SK-N-SH (cell line): ENCODE measurements at regions of chrX and their contacts with region 1.

Region 1: GRCh38 chrX:154013614-154014360 is 5.9 kb downstream of the IRAK1 start:
- DNase-seq: peak; percentile 88
- H3K4me3 ChIP-seq: peak overlapping the region in 1 of 2 experiments; percentile 17; a peak in 1 of 4 replicates
- H3K27ac ChIP-seq: no peak overlapping the region
- H3K4me1 ChIP-seq: peaks cover 0 to 7% of the 10 kb centered on the region in 2 experiments; a peak in 1 of 4 replicates
- H3K27me3 ChIP-seq: no peaks in the 10 kb centered on the region
- CTCF ChIP-seq: peak; percentile 98
- EP300 ChIP-seq: no peak
- RAD21 ChIP-seq: peak; percentile 62

Region 2: DNA sequence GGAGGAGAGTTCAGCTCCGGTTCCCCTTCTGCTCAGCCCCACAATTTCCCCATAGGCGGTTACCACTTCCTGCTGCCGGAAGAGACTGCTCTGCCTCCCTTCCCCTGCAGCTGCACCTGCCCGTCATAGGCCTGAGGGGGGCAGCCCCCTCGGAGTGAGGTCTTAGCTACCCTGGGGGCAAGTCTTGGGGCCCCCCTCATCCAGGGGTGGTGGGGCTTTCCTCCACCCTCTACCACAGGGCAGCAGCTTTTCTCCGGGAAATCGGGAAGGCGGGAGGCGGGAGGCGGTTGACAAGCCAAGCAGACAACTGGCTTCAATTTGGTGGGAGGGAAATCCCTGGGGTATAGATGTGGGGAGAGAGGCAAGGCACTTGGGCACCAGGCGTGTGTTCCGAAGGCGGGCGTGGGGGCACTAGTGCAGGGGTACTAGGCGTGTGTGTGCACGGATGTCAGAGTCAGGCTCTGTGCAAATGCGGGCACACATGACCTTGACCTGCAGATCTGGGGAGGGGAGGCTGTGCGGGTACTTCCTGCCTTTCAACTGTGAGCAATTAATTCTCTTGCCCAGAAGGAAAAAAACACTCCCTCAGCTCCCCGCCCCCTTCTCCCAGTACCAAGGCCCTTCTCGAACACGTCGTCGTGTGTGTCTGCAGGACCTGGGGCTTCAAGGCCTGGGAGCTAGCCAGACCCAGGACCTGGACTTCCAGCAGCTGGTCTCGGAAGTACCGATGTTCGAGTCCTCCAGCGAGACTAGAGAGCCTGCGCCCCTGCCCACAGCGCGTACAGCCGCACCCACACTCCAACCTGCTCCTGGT is 86.7 kb before region 1 on chrX:
- CTCF ChIA-PET with region 1: no interaction called
- POLR2A ChIA-PET with region 1: no interaction called
- DNase-seq: peak; percentile 69
- H3K4me3 ChIP-seq: peak overlapping the region; percentile 71 to 94
- H3K27ac ChIP-seq: peak overlapping the region; percentile 97
- H3K4me1 ChIP-seq: peaks cover 0 to 60% of the 10 kb centered on the region in 2 experiments; a peak in 1 of 4 replicates
- H3K27me3 ChIP-seq: peaks cover 5% of the 10 kb centered on the region; the same call in 1 of the 2 replicates
- CTCF ChIP-seq: no peak
- EP300 ChIP-seq: no peak
- RAD21 ChIP-seq: no peak

Region 3: DNA sequence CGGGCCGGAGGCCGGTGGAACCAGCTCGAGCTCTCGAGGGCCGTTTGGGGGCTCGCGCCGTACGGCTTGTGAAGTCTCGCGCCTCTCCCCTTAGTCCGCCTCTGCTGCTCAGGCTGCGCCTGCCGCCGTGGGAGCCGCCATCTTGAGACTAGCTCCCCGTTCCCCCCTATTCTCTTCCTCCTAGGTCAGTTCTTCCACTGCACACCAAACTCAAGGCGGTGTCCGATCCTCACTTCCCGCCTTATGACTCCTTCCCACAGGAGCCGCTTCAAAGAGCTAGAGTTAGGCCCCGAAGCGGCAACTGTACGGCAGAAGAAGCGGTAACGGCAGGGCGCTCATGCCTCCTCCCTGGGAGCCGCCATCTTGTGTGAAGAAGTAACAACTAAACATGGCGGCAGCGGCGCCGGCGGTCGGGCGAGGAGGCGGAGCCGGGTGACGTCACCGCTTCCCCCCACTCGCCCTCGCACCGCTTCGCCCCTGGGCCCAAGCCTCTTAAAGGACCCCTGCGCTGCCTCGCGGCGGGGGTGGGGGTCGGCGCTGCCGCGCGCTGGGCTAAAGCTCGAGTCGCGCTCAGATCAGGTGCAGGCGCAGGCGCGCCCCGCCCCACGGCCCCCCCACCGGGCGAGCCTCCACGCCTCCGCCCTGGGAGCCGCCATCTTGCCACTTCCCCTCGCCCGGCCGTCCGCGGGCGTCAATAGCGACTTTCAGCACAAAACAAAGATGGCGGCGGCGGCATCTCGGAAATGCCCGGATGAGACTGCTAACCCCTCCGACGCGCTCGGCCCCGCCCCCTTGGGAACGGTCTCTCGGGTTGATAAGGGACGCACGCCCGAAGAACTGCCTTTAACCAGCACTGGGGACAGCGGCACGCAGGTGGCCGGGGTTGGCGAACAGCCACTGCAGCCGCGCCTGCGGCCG is 42.1 kb before region 1 on chrX and contains the start of gene HCFC1:
- CTCF ChIA-PET with region 1: interaction called, 15 read pairs
- POLR2A ChIA-PET with region 1: interaction called, 3 read pairs
- DNase-seq: peak; percentile 90
- H3K4me3 ChIP-seq: peak within 1 kb of the TSS; percentile 90 to 98
- H3K27ac ChIP-seq: peak within 1 kb of the TSS; percentile 99
- H3K4me1 ChIP-seq: peaks cover 16 to 48% of the 10 kb centered on the region in 2 experiments; a peak in 2 of 4 replicates
- H3K27me3 ChIP-seq: no peaks in the 10 kb centered on the region
- CTCF ChIP-seq: no peak
- EP300 ChIP-seq: no peak; a peak in 1 of 4 replicates
- RAD21 ChIP-seq: no peak
- polyA plus RNA-seq, gene HCFC1: 4.7 and 9.5 TPM in 2 replicates

Region 4: GRCh38 chrX:153983321-153983801 is 30.4 kb before region 1 on chrX:
- CTCF ChIA-PET with region 1: no interaction called
- POLR2A ChIA-PET with region 1: no interaction called
- DNase-seq: no peak
- H3K4me3 ChIP-seq: no peak overlapping the region
- H3K27ac ChIP-seq: no peak overlapping the region
- H3K4me1 ChIP-seq: peaks cover 0 to 3% of the 10 kb centered on the region in 2 experiments; a peak in 1 of 4 replicates
- H3K27me3 ChIP-seq: 0 out of 2 replicates have a peak, but pooled peaks cover 5% of the 10 kb centered on the region
- CTCF ChIP-seq: no peak
- EP300 ChIP-seq: no peak
- RAD21 ChIP-seq: no peak

Region 5: DNA sequence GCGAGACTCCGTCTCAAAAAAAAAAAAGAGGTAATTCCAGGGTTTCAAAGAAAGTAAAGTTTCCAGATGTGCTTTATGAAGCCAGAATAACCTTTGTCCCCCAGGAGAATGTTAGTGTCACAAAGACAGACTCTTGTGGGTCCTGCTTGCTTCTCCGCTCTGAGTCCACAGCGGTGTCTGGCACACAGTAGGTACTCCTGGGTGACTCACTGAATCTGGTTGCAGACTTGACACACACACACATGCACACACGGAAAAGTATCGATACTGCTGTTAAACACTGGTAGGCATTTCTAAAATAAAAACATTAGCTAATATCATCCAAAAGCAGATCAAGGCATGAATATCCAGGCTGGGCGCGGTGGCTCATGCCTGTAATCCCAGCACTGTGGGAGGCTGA is 18.3 kb before region 1 on chrX:
- CTCF ChIA-PET with region 1: interaction called, 43 read pairs
- POLR2A ChIA-PET with region 1: no interaction called
- DNase-seq: no peak
- H3K4me3 ChIP-seq: no peak overlapping the region
- H3K27ac ChIP-seq: no peak overlapping the region
- H3K4me1 ChIP-seq: no peaks in the 10 kb centered on the region
- H3K27me3 ChIP-seq: peaks cover 6% of the 10 kb centered on the region
- CTCF ChIP-seq: no peak
- EP300 ChIP-seq: no peak
- RAD21 ChIP-seq: no peak

Region 6: GRCh38 chrX:154029439-154029838 is 15.7 kb after region 1 on chrX:
- CTCF ChIA-PET with region 1: interaction called, 94 read pairs
- POLR2A ChIA-PET with region 1: no interaction called
- DNase-seq: no peak
- H3K4me3 ChIP-seq: no peak overlapping the region
- H3K27ac ChIP-seq: no peak overlapping the region
- H3K4me1 ChIP-seq: no peaks in the 10 kb centered on the region; a peak in 1 of 4 replicates
- H3K27me3 ChIP-seq: peaks cover 82% of the 10 kb centered on the region
- CTCF ChIP-seq: no peak
- EP300 ChIP-seq: no peak
- RAD21 ChIP-seq: no peak

Region 7: DNA sequence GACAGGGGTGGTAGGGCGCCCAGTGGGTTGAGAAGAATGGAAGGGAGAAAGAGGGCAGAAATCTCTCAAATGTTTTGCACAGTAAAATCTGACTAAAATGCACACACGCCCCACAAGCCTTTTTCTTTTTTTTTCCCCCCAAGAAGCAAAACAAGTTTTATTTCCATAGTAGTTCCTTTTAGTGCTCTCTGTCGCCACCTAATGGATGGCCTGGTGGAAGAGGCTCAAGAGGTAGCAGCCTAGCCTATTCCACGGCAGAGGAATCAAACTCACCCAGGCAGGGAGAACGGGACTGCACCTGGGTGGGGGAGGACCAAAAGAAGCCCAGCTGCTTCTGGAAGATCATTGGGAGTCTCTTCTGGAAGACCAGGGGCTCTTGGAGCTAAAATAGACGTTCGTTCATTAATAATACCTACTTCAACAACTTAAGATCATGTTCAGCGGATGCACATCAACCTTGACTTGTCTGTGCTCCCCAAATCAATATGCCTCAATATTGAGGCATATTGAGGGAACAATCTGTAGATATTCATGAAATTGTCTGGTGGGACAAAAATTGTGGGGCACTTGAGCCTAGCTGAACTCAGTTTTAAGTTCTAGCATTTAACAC is 37.5 kb after region 1 on chrX:
- CTCF ChIA-PET with region 1: interaction called, 89 read pairs
- POLR2A ChIA-PET with region 1: no interaction called
- DNase-seq: peak; percentile 70
- H3K4me3 ChIP-seq: no peak overlapping the region
- H3K27ac ChIP-seq: no peak overlapping the region
- H3K4me1 ChIP-seq: peaks cover 10 to 14% of the 10 kb centered on the region in 2 experiments; a peak in 3 of 4 replicates
- H3K27me3 ChIP-seq: no peaks in the 10 kb centered on the region; the same call in 1 of the 2 replicates
- CTCF ChIP-seq: peak; percentile 85
- EP300 ChIP-seq: no peak
- RAD21 ChIP-seq: peak; percentile 63